Breast epithelium (tissue), 4 donors: ENCODE measurements at regions of chr5 and their contacts with region 1.

Region 1: DNA sequence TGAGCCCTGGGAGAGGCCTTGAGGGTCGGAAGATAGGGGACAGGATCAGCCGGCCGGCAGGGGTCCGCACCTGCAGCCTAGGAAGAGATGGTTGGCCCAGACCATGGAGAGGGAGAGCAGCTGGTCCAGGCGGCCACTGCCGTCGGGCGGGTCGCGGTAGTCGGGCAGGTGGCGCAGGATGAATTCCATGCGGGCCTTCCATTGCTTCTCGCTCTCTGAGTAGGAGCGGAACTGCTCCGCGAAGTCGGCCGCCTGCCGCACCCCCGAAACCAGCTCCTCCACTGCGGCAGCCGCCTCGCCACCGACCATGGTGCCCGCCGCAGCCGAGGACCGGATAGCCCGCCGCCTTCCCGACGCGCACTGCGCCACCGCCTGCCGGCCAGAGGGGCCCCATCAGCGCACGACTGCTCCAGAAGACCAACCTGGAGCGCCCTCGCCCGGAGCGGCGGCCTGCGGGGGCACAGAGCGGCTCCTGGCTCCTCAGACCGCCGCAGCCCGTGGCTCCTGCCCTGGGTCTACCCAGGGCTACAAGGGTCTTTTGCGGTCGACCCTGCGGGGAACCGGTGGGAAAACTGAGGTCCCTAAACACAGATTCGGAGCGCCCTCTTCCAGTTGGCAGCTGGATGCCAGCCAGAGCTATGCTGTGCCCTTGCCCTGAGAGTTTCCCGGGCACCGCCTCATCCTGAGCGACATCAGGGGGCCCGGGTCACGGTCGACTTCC is at the start of gene CDKN2AIPNL:
- DNase-seq: peak; percentile 82 to 88
- H3K4me3 ChIP-seq: peak within 1 kb of the TSS; percentile 75 to 98 (median 77)
- H3K27ac ChIP-seq: peak within 1 kb of the TSS; percentile 84 to 89
- H3K4me1 ChIP-seq: peaks cover 4 to 8% of the 10 kb centered on the region in 2 donors
- H3K27me3 ChIP-seq: no peaks in the 10 kb centered on the region
- CTCF ChIP-seq: peak; percentile 20 to 84 (median 76)
- POLR2A ChIP-seq: no peak
- total RNA-seq, gene CDKN2AIPNL: 16.2 to 20.8 (median 19.7) TPM

Region 2: GRCh38 chr5:134465816-134466240 is 54.1 kb after region 1 on chr5:
- intact Hi-C with region 1: loop called (anchors 10 kb)
- DNase-seq: peak; percentile 82 to 84
- H3K4me3 ChIP-seq: peak overlapping the region; percentile 50 to 67 (median 54)
- H3K27ac ChIP-seq: peak overlapping the region; percentile 91 to 95
- H3K4me1 ChIP-seq: peaks cover 0 to 5% of the 10 kb centered on the region in 2 donors
- H3K27me3 ChIP-seq: no peaks in the 10 kb centered on the region
- CTCF ChIP-seq: peak in 1 of 3 donors; percentile 9
- POLR2A ChIP-seq: peak; percentile 4

Region 3: GRCh38 chr5:134527146-134527960 is 115.6 kb after region 1 on chr5:
- intact Hi-C with region 1: loop called (anchors 10 kb)
- DNase-seq: peak; percentile 76 to 84
- H3K4me3 ChIP-seq: peak overlapping the region; percentile 79 to 95 (median 92)
- H3K27ac ChIP-seq: peak overlapping the region; percentile 98 to 99
- H3K4me1 ChIP-seq: peaks cover 0 to 10% of the 10 kb centered on the region in 2 donors
- H3K27me3 ChIP-seq: no peaks in the 10 kb centered on the region
- CTCF ChIP-seq: peak; percentile 91 to 94 (median 93)
- POLR2A ChIP-seq: peak; percentile 40

Region 4: DNA sequence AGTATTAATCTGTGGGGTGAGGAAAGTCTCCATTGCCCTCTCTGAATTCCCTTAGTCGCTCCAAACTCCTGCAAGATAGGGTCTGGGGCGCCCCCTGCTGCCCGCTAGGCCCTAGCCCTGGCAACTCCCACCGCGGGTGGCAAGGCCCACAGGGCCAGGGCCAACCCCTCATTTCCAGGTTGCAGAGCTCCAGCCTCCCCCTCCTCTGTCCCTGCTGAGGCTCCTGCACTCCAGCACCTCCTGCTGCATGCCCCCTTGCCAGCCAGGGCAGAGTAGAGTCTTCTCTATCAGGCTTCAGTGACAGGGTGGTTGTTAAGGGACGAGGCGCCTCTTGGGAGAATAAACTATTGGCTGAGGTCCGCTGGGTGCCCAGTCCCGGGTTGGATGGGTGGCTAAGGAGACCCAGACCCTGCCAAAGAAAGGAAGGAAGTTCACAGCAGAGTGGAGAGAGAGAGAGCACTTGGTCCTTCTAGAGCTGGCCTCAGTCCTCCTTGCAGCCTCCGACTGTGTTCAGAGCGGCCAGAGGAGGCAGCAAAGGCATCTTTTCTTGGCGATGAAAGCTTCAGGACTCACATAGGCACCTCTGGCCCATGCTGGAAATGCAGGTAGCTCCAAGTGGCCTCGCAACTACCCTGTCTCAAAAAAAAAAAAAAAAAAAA is 175.3 kb after region 1 on chr5:
- intact Hi-C with region 1: no loop called
- DNase-seq: peak in 1 of 2 donors; percentile 72
- H3K4me3 ChIP-seq: peak overlapping the region in 1 of 3 donors; percentile 32
- H3K27ac ChIP-seq: no peak overlapping the region
- H3K4me1 ChIP-seq: no peaks in the 10 kb centered on the region
- H3K27me3 ChIP-seq: no peaks in the 10 kb centered on the region
- CTCF ChIP-seq: peak; percentile 23 to 68 (median 58)
- POLR2A ChIP-seq: no peak